Panc1 (cell line): ENCODE measurements at regions of chr22 and their contacts with region 1.

Region 1: GRCh38 chr22:29306175-29306834 is at the start of gene GAS2L1:
- DNase-seq: no peak
- ATAC-seq: peak; percentile 70
- H3K4me3 ChIP-seq: peak within 1 kb of the TSS; percentile 66 to 75
- H3K27ac ChIP-seq: peak within 1 kb of the TSS; percentile 88
- H3K4me1 ChIP-seq: peaks cover 31% of the 10 kb centered on the region
- H3K27me3 ChIP-seq: no peaks in the 10 kb centered on the region
- CTCF ChIP-seq: peak; percentile 13; the same call in 1 of the 2 replicates
- total RNA-seq, gene GAS2L1: 68.8 TPM

Region 2: GRCh38 chr22:29625090-29625825 is 319.0 kb after region 1 on chr22:
- CTCF ChIA-PET with region 1: no interaction called
- POLR2A ChIA-PET with region 1: interaction called, 16 read pairs
- in situ Hi-C with region 1: no loop called
- intact Hi-C with region 1: no loop called
- DNase-seq: no peak
- ATAC-seq: no peak
- H3K4me3 ChIP-seq: 0 out of 4 replicates have a peak overlapping the region, but pooled peaks of 1 of the 2 experiments have one; percentile 2
- H3K27ac ChIP-seq: peak overlapping the region; percentile 83
- H3K4me1 ChIP-seq: peaks cover 93% of the 10 kb centered on the region
- H3K27me3 ChIP-seq: no peaks in the 10 kb centered on the region
- CTCF ChIP-seq: peak; percentile 83